BJ (cell line): ENCODE measurements at regions of chr10 and their contacts with region 1.

Region 1: GRCh38 chr10:98391578-98391991 is 23.4 kb downstream of the PYROXD2 start:
- DNase-seq: no peak
- H3K4me3 ChIP-seq: no peak overlapping the region
- H3K27me3 ChIP-seq: no peaks in the 10 kb centered on the region
- CTCF ChIP-seq: no peak

Region 2: DNA sequence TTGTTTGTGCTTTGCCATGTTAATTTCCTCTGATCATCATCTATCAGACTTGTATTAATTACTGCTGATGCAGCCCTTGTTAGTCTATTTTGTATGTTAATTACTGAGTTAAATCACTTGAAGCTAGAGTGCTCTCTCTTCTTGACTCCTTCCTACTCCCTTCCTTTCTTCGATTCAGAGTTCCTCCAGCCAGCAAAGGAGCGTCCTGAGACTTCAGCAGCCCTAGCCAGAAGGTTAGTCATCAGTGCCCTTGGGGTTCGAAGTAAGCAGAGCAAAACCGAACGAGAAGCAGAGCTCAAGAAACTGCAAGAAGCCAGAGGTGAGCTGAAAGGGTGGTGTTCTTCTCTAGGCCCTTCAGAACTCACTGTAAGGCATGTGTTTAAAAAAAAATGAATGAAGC is 155.7 kb before region 1 on chr10:
- CTCF ChIA-PET with region 1: interaction called, 10 read pairs
- POLR2A ChIA-PET with region 1: no interaction called
- DNase-seq: no peak
- H3K4me3 ChIP-seq: no peak overlapping the region
- H3K27me3 ChIP-seq: no peaks in the 10 kb centered on the region
- CTCF ChIP-seq: no peak

Region 3: DNA sequence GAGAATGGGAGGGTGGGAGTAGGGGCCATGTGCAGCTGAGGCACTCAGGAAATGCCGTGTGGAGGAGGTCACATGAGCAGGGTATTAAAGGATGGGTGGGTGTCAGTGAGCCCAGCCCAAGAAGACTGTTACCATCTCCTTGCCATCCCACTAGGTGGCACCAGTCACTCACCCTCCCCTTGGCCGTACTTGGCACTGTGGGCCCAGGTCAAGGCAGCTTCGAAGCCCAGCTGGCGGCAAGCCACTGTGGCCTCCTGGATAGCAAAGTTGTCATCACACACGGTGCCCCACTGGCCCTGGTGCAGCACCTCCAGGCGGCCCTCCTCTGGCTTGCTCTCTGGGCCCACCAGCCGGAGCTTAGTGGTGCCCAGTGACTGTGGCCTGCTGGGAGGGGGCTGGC is 129.0 kb before region 1 on chr10:
- CTCF ChIA-PET with region 1: interaction called, 18 read pairs
- POLR2A ChIA-PET with region 1: no interaction called
- DNase-seq: no peak
- H3K4me3 ChIP-seq: no peak overlapping the region
- H3K27me3 ChIP-seq: no peaks in the 10 kb centered on the region
- CTCF ChIP-seq: peak; percentile 58

Region 4: DNA sequence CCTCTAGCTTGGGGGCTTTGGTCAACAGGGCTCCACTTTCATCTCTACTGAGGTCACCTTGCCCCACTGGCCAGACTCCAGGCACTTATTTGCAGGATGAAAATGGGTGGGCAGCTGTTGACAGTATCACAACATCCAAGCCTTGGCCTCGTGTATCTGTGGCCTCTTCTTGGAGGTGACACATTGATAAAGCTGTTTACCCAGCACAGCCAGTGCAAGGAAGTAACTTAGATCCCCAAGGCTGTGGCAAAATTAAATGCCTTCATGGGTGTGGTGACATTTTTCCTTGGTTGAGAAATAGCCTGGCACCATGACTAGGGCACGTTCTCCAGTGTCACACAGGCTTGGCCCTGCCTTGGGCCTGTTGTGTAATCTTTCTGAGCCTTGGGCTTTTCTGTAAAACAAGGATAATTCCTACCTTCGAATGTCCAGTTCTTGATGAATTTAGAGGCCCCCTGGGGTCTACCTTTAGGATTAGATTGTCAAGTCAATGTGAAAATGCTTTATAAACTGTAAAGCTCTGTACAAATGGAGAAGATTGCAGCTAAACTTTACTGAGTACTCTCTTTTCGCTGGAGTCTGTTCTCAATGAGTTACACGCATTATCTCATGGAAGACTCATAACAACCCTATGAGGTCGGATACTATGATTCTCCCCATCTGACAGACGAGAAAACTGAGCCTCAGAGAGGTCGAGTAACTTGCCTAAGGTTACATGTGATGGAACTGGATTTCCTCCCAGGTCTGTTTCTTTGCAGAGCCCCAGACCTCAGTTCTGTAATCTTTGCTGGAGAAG is 76.9 kb before region 1 on chr10:
- CTCF ChIA-PET with region 1: interaction called, 48 read pairs
- POLR2A ChIA-PET with region 1: no interaction called
- DNase-seq: peak; percentile 37
- H3K4me3 ChIP-seq: no peak overlapping the region
- H3K27me3 ChIP-seq: no peaks in the 10 kb centered on the region
- CTCF ChIP-seq: no peak

Region 5: GRCh38 chr10:98408799-98409198 is 17.2 kb after region 1 on chr10:
- CTCF ChIA-PET with region 1: interaction called, 14 read pairs
- POLR2A ChIA-PET with region 1: no interaction called
- DNase-seq: no peak
- H3K4me3 ChIP-seq: no peak overlapping the region
- H3K27me3 ChIP-seq: no peaks in the 10 kb centered on the region
- CTCF ChIP-seq: no peak

Region 6: DNA sequence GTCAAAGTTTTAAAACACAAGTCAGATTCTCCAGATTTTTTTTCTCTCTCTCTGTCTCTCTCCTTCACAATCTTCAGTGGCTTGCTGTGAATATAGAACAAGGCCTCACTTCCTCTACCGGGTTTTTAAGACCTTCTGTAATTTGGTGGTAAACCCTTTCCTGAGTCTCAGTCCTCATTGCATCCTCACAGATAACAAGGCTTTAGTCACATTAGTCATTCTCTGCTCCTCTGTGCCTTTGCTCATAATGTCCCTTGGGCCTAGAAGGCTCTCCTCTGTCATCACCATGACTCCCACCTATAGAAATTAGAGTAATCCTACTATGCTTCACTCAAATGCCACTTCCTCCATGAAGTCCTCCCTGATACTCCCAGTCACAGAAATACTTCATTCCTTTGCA is 227.9 kb after region 1 on chr10:
- CTCF ChIA-PET with region 1: no interaction called
- POLR2A ChIA-PET with region 1: no interaction called
- DNase-seq: no peak
- H3K4me3 ChIP-seq: no peak overlapping the region
- H3K27me3 ChIP-seq: no peaks in the 10 kb centered on the region
- CTCF ChIP-seq: no peak